Activated CD8-positive, alpha-beta memory T cell treated with anti-CD3 and anti-CD28 coated beads, Interleukin-2, amount 10 ng/mL, durations not matched to agents 7 days and 5 days (primary cell): ENCODE measurements at regions of chr11 and their contacts with region 1.

Region 1: DNA sequence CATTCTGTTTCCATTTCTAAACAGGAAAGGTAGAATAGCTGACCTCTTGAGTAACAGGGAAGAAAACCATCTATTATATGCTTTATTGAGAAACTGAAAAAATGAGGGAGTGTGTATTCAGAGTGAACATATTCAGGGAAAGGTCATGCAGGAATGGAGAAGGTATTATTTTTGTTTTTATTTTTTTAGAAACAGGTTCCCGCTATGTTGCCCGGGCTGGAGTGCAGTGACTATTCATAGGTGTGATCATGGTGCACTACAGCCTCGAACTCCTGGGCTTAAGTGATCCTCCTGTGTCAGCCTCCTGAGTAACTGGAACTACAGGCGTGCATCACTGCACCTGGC is 8.8 kb upstream of the RCE1 start:
- DNase-seq: no peak
- ATAC-seq: no peak
- H3K4me3 Mint-ChIP-seq: no peak overlapping the region
- H3K27ac Mint-ChIP-seq: no peak overlapping the region
- H3K4me1 Mint-ChIP-seq: peaks cover 5% of the 10 kb centered on the region
- H3K27me3 Mint-ChIP-seq: no peaks in the 10 kb centered on the region

Region 2: GRCh38 chr11:66686801-66687750 is 147.4 kb before region 1 on chr11:
- CTCF ChIA-PET with region 1: interaction called, 22 read pairs
- DNase-seq: no peak
- ATAC-seq: no peak
- H3K4me3 Mint-ChIP-seq: no peak overlapping the region
- H3K27ac Mint-ChIP-seq: no peak overlapping the region
- H3K4me1 Mint-ChIP-seq: no peaks in the 10 kb centered on the region
- H3K27me3 Mint-ChIP-seq: no peaks in the 10 kb centered on the region

Region 3: DNA sequence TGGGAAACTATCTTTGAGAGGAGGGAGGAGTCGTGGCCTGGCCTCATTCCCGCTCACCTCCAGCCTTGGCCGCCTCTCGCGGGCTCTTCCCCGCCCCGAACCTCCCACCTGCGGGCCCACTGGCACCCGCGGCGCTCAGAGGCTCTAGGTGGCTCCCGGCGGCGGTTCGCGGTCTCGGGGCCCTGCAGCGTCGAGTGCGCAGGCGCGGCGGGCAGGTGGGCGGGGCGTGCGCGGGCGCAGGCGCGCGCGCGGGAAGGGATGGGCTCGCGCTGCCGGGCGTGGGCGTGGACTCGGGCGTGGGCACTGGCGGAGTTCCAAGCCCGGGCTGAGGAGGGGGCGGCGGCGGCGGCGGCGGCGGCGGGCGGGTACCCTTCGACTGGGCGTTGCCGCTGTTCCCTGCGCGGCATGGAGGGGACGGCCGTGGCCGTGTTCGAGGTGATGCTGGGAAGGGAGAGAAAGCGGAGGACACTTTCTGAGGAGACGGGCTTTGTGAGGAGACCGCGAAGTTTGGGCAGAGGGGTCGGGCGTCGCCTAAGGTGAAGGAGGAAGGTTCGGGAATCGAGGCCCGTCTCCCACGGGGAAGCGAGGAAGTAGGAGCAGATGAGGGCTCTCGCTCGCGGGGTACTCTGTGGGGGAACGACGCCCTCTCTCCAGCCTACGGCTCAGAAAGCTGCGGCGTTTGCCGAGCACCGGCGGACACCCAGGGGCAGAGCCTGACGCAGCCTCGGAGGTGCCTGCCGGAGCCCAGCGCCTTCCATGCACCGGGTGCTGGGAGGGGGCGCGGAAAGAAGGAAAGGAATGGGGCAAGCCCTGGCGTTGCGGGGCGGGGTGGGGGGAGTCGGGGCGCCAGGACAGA is 89.8 kb before region 1 on chr11:
- CTCF ChIA-PET with region 1: no interaction called
- DNase-seq: peak; percentile 89
- ATAC-seq: peak; percentile 91
- H3K4me3 Mint-ChIP-seq: peak overlapping the region; percentile 89
- H3K27ac Mint-ChIP-seq: peak overlapping the region; percentile 76
- H3K4me1 Mint-ChIP-seq: peaks cover 12% of the 10 kb centered on the region
- H3K27me3 Mint-ChIP-seq: peaks cover 2% of the 10 kb centered on the region

Region 4: DNA sequence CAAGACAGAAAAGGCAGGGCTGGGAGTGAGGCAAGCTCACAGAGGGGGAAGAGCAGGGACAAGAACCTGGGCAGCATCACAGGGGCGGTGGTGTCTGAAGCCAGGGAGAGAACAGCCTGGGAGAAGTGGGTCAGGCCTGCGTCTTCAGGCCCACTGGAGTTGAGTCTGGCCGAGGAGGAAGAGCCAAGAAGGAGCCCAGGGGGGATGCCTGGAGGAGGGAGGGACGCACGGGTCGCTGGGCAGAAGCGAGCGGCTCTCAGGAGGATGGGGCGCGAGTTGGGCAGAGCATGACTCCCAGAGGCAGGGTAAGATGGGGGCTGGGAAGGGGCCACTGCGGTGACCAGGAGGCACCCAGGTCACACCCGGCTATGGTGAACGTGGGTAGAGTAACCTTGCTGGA is 40.9 kb after region 1 on chr11:
- CTCF ChIA-PET with region 1: no interaction called
- DNase-seq: no peak
- ATAC-seq: no peak
- H3K4me3 Mint-ChIP-seq: no peak overlapping the region
- H3K27ac Mint-ChIP-seq: no peak overlapping the region
- H3K4me1 Mint-ChIP-seq: peaks cover 4% of the 10 kb centered on the region
- H3K27me3 Mint-ChIP-seq: peaks cover 9% of the 10 kb centered on the region

Region 5: GRCh38 chr11:66936311-66936711 is 101.8 kb after region 1 on chr11:
- CTCF ChIA-PET with region 1: no interaction called
- DNase-seq: no peak
- ATAC-seq: no peak
- H3K4me3 Mint-ChIP-seq: no peak overlapping the region
- H3K27ac Mint-ChIP-seq: no peak overlapping the region
- H3K4me1 Mint-ChIP-seq: no peaks in the 10 kb centered on the region
- H3K27me3 Mint-ChIP-seq: peaks cover 10% of the 10 kb centered on the region